CD4-positive, alpha-beta memory T cell (primary cell): ENCODE measurements at regions of chr3 and their contacts with region 1.

Region 1: DNA sequence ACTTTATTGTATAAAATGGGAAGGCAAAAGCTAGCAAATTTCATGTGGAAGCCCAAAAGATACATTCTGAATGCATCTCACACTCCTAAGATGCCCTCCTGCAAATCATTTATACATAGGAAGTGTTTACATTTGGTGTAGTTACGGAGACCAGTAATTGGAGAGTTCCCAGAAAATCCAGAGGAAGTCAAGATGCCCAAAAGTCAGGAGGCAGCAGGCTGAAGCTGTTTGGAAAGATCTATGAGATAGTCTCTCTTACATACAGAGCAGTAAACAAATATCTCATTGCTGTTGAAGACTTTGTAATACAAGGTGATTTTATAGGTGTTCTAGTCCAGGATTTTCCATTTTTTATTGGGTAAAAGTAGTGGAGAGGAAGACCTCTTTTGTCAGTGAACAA is 8.8 kb downstream of the KLHL24 start:
- DNase-seq: no peak
- H3K4me3 ChIP-seq: no peak overlapping the region
- H3K4me3 Mint-ChIP-seq: no peak overlapping the region
- H3K27ac ChIP-seq: no peak overlapping the region
- H3K27ac Mint-ChIP-seq: no peak overlapping the region
- H3K4me1 ChIP-seq: peaks cover 5% of the 10 kb centered on the region
- H3K4me1 Mint-ChIP-seq: peaks cover 16 to 30% (median 18%) of the 10 kb centered on the region in 4 donors
- H3K27me3 ChIP-seq: no peaks in the 10 kb centered on the region
- H3K27me3 Mint-ChIP-seq: no peaks in the 10 kb centered on the region

Region 2: DNA sequence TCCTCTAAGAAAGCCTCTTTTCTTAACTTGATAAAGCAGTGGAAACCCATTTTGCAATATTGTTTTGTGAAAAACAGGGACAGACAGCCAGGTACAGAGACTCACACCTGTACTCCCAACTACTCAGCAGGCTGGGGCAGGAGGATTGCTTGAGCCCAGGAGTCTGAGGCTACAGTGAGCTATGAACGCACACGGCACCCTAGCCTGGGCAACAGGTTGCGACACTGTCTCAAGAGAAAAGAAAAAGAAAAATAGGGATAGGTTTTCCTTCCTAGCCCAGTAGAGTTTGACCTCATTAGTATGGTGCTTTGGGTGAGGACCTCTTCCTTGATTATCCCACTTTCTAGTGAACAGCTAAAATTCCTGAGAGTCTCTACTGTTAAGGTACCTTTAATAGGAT is 35.8 kb after region 1 on chr3:
- CTCF ChIA-PET with region 1: no interaction called
- POLR2A ChIA-PET with region 1: no interaction called
- intact Hi-C with region 1: loop called (anchors 5 kb)
- DNase-seq: no peak
- H3K4me3 ChIP-seq: no peak overlapping the region
- H3K4me3 Mint-ChIP-seq: no peak overlapping the region
- H3K27ac ChIP-seq: no peak overlapping the region
- H3K27ac Mint-ChIP-seq: peak overlapping the region in 1 of 7 donors; percentile 36
- H3K4me1 ChIP-seq: no peaks in the 10 kb centered on the region
- H3K4me1 Mint-ChIP-seq: peaks cover 0 to 1% (median 0%) of the 10 kb centered on the region in 4 donors
- H3K27me3 ChIP-seq: no peaks in the 10 kb centered on the region
- H3K27me3 Mint-ChIP-seq: no peaks in the 10 kb centered on the region